ENCODE measurements at regions of chr7 and their contacts with region 1.

Region 1: DNA sequence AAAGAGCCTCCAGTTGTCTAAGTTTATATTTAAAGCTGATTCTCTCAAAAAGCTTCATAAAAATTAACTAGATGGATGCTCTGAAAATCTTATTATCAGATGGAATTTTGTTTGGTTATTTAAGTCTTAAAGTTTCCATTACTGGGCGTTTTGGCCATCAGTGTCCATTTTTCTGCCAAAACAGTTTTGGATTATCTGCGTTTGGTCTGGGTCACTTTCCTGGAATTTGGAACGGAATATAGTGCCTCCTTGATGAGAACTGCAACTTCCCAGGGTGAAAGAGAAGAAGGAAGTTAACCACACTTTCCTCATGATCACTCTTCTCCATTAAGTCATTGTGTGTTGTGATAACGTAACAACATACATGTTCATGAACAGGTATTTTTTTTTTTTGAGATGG is 764.9 kb upstream of the AUTS2 start:
- DNase-seq: no peak
- H3K4me3 ChIP-seq: no peak overlapping the region
- H3K4me3 Mint-ChIP-seq: no peak overlapping the region
- H3K27ac Mint-ChIP-seq: no peak overlapping the region
- H3K4me1 ChIP-seq: no peaks in the 10 kb centered on the region
- H3K4me1 Mint-ChIP-seq: no peaks in the 10 kb centered on the region
- H3K27me3 ChIP-seq: no peaks in the 10 kb centered on the region
- H3K27me3 Mint-ChIP-seq: no peaks in the 10 kb centered on the region
- CTCF ChIP-seq: no peak

Region 2: DNA sequence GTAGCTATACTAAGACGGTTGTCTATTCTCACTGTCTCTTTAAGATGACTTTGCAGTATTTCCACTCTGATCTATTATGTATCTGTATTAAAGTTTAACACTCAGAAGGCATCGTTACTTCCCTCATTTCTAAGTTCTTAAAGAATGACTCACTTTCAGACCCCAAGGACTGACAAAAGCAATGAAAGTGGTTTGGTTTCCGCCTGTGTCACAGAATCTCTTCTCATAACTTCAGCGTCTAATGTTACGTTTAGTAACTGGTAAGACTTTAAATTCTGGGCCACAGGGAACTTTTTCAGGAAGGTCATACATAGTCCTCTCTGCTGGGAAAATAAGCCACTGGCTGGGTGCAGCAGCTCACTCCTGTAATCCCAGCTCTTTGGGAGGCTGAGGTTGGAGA is 127.1 kb before region 1 on chr7:
- CTCF ChIA-PET with region 1: no interaction called
- POLR2A ChIA-PET with region 1: no interaction called
- intact Hi-C with region 1: no loop called
- DNase-seq: no peak
- H3K4me3 ChIP-seq: no peak overlapping the region
- H3K4me3 Mint-ChIP-seq: no peak overlapping the region
- H3K27ac Mint-ChIP-seq: no peak overlapping the region
- H3K4me1 ChIP-seq: no peaks in the 10 kb centered on the region
- H3K4me1 Mint-ChIP-seq: no peaks in the 10 kb centered on the region
- H3K27me3 ChIP-seq: no peaks in the 10 kb centered on the region
- H3K27me3 Mint-ChIP-seq: no peaks in the 10 kb centered on the region
- CTCF ChIP-seq: no peak

Region 3: GRCh38 chr7:68770636-68771035 is 62.8 kb before region 1 on chr7:
- CTCF ChIA-PET with region 1: no interaction called
- POLR2A ChIA-PET with region 1: no interaction called
- intact Hi-C with region 1: loop called (anchors 10 kb)
- DNase-seq: no peak
- H3K4me3 ChIP-seq: no peak overlapping the region
- H3K4me3 Mint-ChIP-seq: no peak overlapping the region
- H3K27ac Mint-ChIP-seq: no peak overlapping the region
- H3K4me1 ChIP-seq: no peaks in the 10 kb centered on the region
- H3K4me1 Mint-ChIP-seq: no peaks in the 10 kb centered on the region
- H3K27me3 ChIP-seq: no peaks in the 10 kb centered on the region
- H3K27me3 Mint-ChIP-seq: peaks cover 2% of the 10 kb centered on the region
- CTCF ChIP-seq: no peak

Region 4: GRCh38 chr7:68785036-68785435 is 48.4 kb before region 1 on chr7:
- CTCF ChIA-PET with region 1: no interaction called
- POLR2A ChIA-PET with region 1: no interaction called
- intact Hi-C with region 1: no loop called
- DNase-seq: no peak
- H3K4me3 ChIP-seq: no peak overlapping the region
- H3K4me3 Mint-ChIP-seq: no peak overlapping the region
- H3K27ac Mint-ChIP-seq: no peak overlapping the region
- H3K4me1 ChIP-seq: no peaks in the 10 kb centered on the region
- H3K4me1 Mint-ChIP-seq: no peaks in the 10 kb centered on the region
- H3K27me3 ChIP-seq: no peaks in the 10 kb centered on the region
- H3K27me3 Mint-ChIP-seq: no peaks in the 10 kb centered on the region
- CTCF ChIP-seq: no peak